ENCODE measurements at regions of chr3 and their contacts with region 1.

Region 1: DNA sequence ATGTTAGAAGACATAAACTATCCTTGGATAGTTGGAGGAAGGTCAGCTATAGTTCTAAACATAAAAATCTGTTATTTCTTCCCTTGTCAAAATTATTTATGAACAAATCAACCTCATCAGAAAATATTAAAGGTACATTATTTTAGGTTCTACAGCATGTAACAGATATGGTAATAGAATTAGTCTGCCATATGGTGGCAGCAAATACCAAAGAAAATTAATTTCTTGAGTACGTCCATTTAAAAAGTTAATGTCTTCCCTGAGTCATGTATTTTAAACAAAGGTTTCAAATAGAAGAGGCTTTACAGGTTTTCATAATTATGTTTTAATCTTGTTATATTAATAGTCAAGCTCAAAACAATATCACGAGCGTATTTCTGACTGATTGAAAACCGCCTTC is 17.9 kb upstream of the ANKRD28 start:
- DNase-seq: peak in 6 of 9 donors; percentile 12 to 48 (median 28)
- ATAC-seq: peak; percentile 53
- H3K4me3 ChIP-seq: no peak overlapping the region
- H3K4me3 Mint-ChIP-seq: no peak overlapping the region
- H3K27ac ChIP-seq: no peak overlapping the region
- H3K27ac Mint-ChIP-seq: peak overlapping the region in 1 of 9 donors; percentile 59
- H3K4me1 ChIP-seq: peaks cover 0 to 8% of the 10 kb centered on the region in 2 donors
- H3K4me1 Mint-ChIP-seq: peaks cover 6 to 47% (median 43%) of the 10 kb centered on the region in 7 donors
- H3K27me3 ChIP-seq: no peaks in the 10 kb centered on the region
- H3K27me3 Mint-ChIP-seq: no peaks in the 10 kb centered on the region

Region 2: GRCh38 chr3:15636003-15636709 is 179.5 kb before region 1 on chr3:
- CTCF ChIA-PET with region 1: interaction called, 13 read pairs
- POLR2A ChIA-PET with region 1: no interaction called
- intact Hi-C with region 1: no loop called
- DNase-seq: peak in 1 of 9 donors; percentile 43
- ATAC-seq: peak; percentile 84
- H3K4me3 ChIP-seq: peak overlapping the region; percentile 30
- H3K4me3 Mint-ChIP-seq: peak overlapping the region in 6 of 10 donors; percentile 6 to 61 (median 26)
- H3K27ac ChIP-seq: no peak overlapping the region
- H3K27ac Mint-ChIP-seq: peak overlapping the region in 3 of 9 donors; percentile 9 to 73 (median 64)
- H3K4me1 ChIP-seq: peaks cover 8 to 12% of the 10 kb centered on the region in 2 donors
- H3K4me1 Mint-ChIP-seq: peaks cover 19 to 45% (median 39%) of the 10 kb centered on the region in 7 donors
- H3K27me3 ChIP-seq: no peaks in the 10 kb centered on the region
- H3K27me3 Mint-ChIP-seq: no peaks in the 10 kb centered on the region

Region 3: GRCh38 chr3:15753056-15753710 is 62.5 kb before region 1 on chr3:
- CTCF ChIA-PET with region 1: no interaction called
- POLR2A ChIA-PET with region 1: no interaction called
- intact Hi-C with region 1: loop called in 1 of 2 experiments (anchors 5 kb)
- DNase-seq: no peak
- ATAC-seq: no peak
- H3K4me3 ChIP-seq: no peak overlapping the region
- H3K4me3 Mint-ChIP-seq: no peak overlapping the region
- H3K27ac ChIP-seq: no peak overlapping the region
- H3K27ac Mint-ChIP-seq: peak overlapping the region in 1 of 9 donors; percentile 51
- H3K4me1 ChIP-seq: no peaks in the 10 kb centered on the region
- H3K4me1 Mint-ChIP-seq: peaks cover 2 to 20% (median 6%) of the 10 kb centered on the region in 7 donors
- H3K27me3 ChIP-seq: no peaks in the 10 kb centered on the region
- H3K27me3 Mint-ChIP-seq: no peaks in the 10 kb centered on the region

Region 4: GRCh38 chr3:15859507-15860013 is 43.9 kb after region 1 on chr3:
- CTCF ChIA-PET with region 1: no interaction called
- POLR2A ChIA-PET with region 1: no interaction called
- intact Hi-C with region 1: loop called (anchors 2 kb)
- DNase-seq: peak; percentile 57 to 86 (median 71)
- ATAC-seq: peak; percentile 91
- H3K4me3 ChIP-seq: peak overlapping the region; percentile 63
- H3K4me3 Mint-ChIP-seq: peak overlapping the region; percentile 85 to 99 (median 95)
- H3K27ac ChIP-seq: peak overlapping the region; percentile 77
- H3K27ac Mint-ChIP-seq: peak overlapping the region in 6 of 9 donors; percentile 76 to 98 (median 92)
- H3K4me1 ChIP-seq: peaks cover 12 to 14% of the 10 kb centered on the region in 2 donors
- H3K4me1 Mint-ChIP-seq: peaks cover 21 to 50% (median 43%) of the 10 kb centered on the region in 7 donors
- H3K27me3 ChIP-seq: no peaks in the 10 kb centered on the region
- H3K27me3 Mint-ChIP-seq: peaks cover 0 to 10% (median 0%) of the 10 kb centered on the region in 5 donors

Region 5: DNA sequence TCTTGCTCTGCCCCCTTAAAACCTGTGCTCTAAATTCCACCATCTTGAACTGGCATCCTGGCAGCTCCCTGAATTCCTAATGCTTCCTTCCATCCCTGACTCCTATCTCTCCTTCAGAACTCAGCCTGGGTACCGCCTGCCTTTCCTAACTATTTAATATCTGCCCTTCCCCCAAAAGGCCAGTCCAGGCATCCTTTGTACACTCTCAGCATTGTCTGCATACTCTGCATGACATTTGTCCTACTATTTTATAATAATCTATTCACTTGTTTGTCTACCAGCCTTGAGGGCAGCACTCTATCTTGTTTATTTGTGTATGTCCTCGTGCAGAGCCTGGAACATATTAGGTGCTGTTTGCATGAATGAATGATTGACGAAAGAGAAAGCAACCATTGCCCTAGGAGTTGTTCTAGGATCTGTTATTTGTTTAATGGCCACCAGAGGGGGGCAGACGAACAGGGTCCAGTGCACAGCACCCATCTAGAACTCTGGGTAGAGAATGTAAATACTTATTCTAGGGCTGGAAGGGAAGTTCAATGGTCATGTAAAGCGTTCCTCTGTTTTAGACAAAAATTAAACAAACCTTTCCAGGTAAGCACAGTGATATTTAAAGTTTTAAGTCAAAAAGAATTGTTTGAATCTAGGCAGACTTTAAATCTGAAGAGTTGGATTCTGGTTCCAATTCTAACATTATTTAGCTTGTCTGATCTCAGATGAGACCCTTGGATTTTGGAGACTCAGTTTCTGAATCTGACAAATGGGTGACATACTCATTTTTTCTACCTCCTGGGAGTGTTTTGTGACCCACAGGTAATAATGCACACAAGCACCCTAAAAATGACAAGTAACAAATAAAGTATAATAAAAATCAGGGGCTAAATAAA is 233.0 kb after region 1 on chr3:
- CTCF ChIA-PET with region 1: no interaction called
- POLR2A ChIA-PET with region 1: no interaction called
- intact Hi-C with region 1: loop called (anchors 2 kb)
- DNase-seq: peak in 7 of 9 donors; percentile 11 to 53 (median 43)
- ATAC-seq: peak; percentile 92
- H3K4me3 ChIP-seq: no peak overlapping the region
- H3K4me3 Mint-ChIP-seq: peak overlapping the region in 5 of 10 donors; percentile 4 to 72 (median 48)
- H3K27ac ChIP-seq: no peak overlapping the region
- H3K27ac Mint-ChIP-seq: no peak overlapping the region
- H3K4me1 ChIP-seq: no peaks in the 10 kb centered on the region
- H3K4me1 Mint-ChIP-seq: peaks cover 0 to 5% (median 4%) of the 10 kb centered on the region in 7 donors
- H3K27me3 ChIP-seq: no peaks in the 10 kb centered on the region
- H3K27me3 Mint-ChIP-seq: peaks cover 0 to 5% (median 0%) of the 10 kb centered on the region in 5 donors

Region 6: GRCh38 chr3:16247276-16248061 is 431.8 kb after region 1 on chr3:
- CTCF ChIA-PET with region 1: interaction called, 3 read pairs
- POLR2A ChIA-PET with region 1: no interaction called
- intact Hi-C with region 1: loop called (anchors 1 kb)
- DNase-seq: peak; percentile 55 to 80 (median 72)
- ATAC-seq: peak; percentile 93
- H3K4me3 ChIP-seq: no peak overlapping the region
- H3K4me3 Mint-ChIP-seq: peak overlapping the region in 3 of 10 donors; percentile 4 to 37 (median 21)
- H3K27ac ChIP-seq: no peak overlapping the region
- H3K27ac Mint-ChIP-seq: peak overlapping the region in 2 of 9 donors; percentile 7 to 41
- H3K4me1 ChIP-seq: no peaks in the 10 kb centered on the region
- H3K4me1 Mint-ChIP-seq: peaks cover 0 to 32% (median 8%) of the 10 kb centered on the region in 7 donors
- H3K27me3 ChIP-seq: no peaks in the 10 kb centered on the region
- H3K27me3 Mint-ChIP-seq: no peaks in the 10 kb centered on the region

Region 7: DNA sequence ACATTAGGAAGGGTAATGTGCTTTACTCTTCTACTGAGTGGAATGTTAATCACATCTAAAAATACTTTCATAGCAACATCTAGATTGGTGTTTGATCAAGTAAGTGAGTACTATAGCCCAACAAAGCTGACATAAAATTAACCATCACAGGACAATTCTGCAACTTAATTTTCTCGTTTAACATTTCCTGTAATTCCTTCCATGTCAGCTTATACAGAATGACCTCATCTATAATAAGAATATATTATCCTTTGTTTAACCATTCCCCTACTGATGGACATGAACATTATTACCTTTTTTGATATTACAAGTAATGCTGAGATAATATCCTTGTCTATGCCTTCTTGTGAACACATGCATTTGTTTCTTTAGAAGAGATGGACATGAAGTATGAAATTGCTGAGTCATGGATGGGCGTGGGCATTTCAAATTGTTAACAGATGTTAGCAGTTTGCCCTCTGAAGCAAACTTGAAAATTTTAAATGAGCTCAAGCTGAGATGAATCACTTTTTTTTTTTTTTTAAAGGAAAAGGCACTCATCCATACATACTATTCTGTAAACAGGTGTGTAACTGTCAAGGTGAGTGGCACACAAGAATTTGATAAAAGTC is 534.4 kb after region 1 on chr3:
- CTCF ChIA-PET with region 1: no interaction called
- POLR2A ChIA-PET with region 1: no interaction called
- intact Hi-C with region 1: no loop called
- DNase-seq: no peak
- ATAC-seq: no peak
- H3K4me3 ChIP-seq: no peak overlapping the region
- H3K4me3 Mint-ChIP-seq: peak overlapping the region in 1 of 10 donors; percentile 9
- H3K27ac ChIP-seq: no peak overlapping the region
- H3K27ac Mint-ChIP-seq: peak overlapping the region in 8 of 9 donors; percentile 28 to 78 (median 64)
- H3K4me1 ChIP-seq: peaks cover 0 to 6% of the 10 kb centered on the region in 2 donors
- H3K4me1 Mint-ChIP-seq: peaks cover 22 to 89% (median 72%) of the 10 kb centered on the region in 7 donors
- H3K27me3 ChIP-seq: no peaks in the 10 kb centered on the region
- H3K27me3 Mint-ChIP-seq: no peaks in the 10 kb centered on the region

Measured in naive thymus-derived CD4-positive, alpha-beta T cell (primary cell).